ENCODE measurements at regions of chr19 and their contacts with region 1.

Region 1: DNA sequence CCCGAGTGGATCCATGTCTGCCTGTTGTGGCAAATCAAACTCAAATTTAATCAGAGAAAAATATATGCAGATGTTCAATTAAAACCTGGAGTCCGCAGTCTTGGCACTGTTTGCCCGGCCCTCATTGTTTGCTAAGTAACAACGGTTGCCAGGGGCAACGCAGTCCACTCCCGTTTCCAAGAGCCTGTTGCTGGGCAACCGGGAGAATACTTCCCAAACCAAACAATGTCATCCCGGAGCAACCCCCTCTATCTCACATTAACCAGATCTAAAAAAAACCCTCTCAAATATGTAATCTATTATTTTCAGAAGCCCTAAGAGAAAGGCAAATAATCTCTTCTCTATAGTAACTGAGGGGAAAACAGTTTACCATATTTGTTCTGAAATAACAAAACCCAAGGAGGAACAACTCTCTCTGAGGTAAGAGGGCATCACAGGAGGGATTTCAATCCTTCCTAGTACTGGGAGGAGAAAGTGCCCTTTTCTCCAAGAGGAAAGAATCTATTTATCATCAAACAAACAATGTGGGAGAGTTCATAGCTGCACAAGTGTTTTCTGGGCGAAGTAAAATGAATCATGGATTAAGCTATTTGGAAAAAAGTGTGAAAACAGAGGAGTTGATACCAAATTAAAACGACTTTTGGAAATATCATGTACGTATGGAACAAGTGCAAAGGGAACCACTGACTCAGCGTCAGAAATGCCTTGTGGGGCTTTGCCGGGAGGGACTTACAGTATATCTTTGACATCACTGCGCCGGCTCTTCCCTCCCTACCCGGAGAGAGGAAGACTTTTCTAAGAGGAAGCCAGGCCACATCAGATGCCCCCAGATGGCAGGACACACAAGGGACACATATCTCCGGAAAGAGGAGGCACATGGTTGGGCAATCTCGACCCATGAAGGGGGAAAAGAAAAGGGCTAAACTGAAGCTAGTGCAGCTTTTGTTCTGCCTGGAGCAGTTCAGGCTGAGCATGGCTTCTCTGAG is 43.3 kb downstream of the RFX2 start:
- DNase-seq: peak; percentile 91 to 98 (median 96)
- H3K4me3 ChIP-seq: peak overlapping the region in 1 of 3 experiments; percentile 29
- H3K4me3 Mint-ChIP-seq: peak overlapping the region; percentile 62 to 80
- H3K27ac ChIP-seq: peak overlapping the region; percentile 75 to 95
- H3K27ac Mint-ChIP-seq: peak overlapping the region; percentile 97 to 99 (median 99)
- H3K4me1 ChIP-seq: peaks cover 73 to 77% of the 10 kb centered on the region in 2 donors
- H3K4me1 Mint-ChIP-seq: peaks cover 89% of the 10 kb centered on the region
- H3K27me3 ChIP-seq: no peaks in the 10 kb centered on the region
- H3K27me3 Mint-ChIP-seq: peaks cover 0 to 18% (median 0%) of the 10 kb centered on the region in 3 donors
- CTCF ChIP-seq: no peak

Region 2: DNA sequence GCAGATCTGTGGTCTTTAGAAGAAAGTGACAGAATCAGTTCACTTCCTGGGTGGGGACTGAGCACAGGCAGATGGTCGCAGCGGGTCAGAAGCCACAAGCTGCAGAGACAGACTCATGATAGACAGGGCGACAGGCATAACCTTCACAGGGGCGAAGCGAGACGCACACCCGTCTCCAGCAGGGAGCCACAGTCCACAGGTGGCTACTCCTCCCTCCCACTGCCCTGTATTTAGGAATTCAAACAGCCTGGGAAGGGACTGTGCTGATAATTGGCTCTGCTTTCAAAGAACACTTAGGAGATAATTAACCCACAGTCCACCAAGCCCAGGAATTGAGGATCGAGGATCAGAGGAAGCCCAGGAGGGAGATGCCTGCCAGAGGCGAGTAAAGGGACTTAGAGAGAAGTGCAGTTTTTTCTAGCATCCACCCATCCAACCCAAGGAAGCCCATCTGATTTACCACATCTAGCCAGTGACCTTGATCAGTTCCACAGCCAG is 20.2 kb after region 1 on chr19:
- intact Hi-C with region 1: loop called (anchors 1 to 2 kb)
- DNase-seq: peak in 1 of 3 donors; percentile 25
- H3K4me3 ChIP-seq: peak overlapping the region in 1 of 3 experiments; percentile 44
- H3K4me3 Mint-ChIP-seq: peak overlapping the region; percentile 56 to 81
- H3K27ac ChIP-seq: peak overlapping the region; percentile 89
- H3K27ac Mint-ChIP-seq: peak overlapping the region; percentile 89 to 99 (median 95)
- H3K4me1 ChIP-seq: peaks cover 28 to 33% of the 10 kb centered on the region in 2 donors
- H3K4me1 Mint-ChIP-seq: peaks cover 39% of the 10 kb centered on the region
- H3K27me3 ChIP-seq: no peaks in the 10 kb centered on the region
- H3K27me3 Mint-ChIP-seq: peaks cover 0 to 3% (median 1%) of the 10 kb centered on the region in 3 donors
- CTCF ChIP-seq: no peak

Region 3: DNA sequence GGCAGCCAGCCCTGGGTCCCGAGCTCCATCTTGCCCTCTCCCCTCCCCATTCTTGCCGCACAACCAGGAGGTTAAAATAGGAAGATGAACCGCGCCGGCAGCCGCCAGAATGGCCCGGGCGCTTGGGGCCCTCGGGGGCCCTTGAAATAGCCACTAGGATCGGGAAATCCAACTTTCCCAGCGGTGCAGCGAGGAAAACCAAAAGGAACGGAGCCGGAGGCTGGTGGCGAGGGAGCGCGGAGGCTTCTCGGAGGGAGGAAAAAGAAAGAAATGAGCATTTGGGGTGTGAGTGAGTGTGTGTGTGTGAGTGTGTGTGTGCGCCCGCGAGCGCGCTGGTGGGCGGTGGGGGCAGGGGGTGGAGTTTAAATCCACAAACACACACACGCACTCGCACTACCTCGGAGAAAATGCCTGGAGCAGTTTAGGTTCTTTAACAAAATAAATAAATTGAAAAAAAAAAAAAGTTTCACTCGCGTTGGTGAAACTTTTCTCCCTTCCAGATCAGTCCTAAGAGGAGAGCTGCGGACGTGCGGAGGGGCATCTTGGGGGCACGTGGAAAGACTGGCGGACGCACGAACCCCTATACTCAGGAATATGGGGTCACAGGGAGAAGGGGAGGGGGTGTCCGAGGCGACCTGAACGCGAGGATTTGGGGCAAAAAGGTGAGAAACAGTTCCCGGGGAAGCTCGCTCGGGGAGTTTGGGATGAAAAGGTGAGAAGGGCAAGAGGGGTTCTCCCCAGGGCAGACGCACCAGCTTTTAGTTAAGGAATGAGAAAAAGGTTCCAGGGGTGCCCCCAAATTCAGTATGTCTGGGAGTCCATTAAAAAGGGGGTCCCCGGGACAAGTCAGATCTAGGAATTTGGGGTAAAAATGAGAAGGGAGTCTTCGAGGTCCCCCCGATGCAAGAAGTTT is 42.0 kb after region 1 on chr19:
- intact Hi-C with region 1: loop called (anchors 5 kb)
- DNase-seq: peak in 1 of 3 donors; percentile 49
- H3K4me3 ChIP-seq: peak overlapping the region; percentile 36 to 85 (median 58)
- H3K4me3 Mint-ChIP-seq: peak overlapping the region; percentile 95 to 98
- H3K27ac ChIP-seq: peak overlapping the region; percentile 28 to 29
- H3K27ac Mint-ChIP-seq: peak overlapping the region; percentile 64 to 96 (median 93)
- H3K4me1 ChIP-seq: peaks cover 35 to 44% of the 10 kb centered on the region in 2 donors
- H3K4me1 Mint-ChIP-seq: peaks cover 45% of the 10 kb centered on the region
- H3K27me3 ChIP-seq: peaks cover 0 to 17% of the 10 kb centered on the region in 2 donors
- H3K27me3 Mint-ChIP-seq: peaks cover 16 to 21% (median 20%) of the 10 kb centered on the region in 3 donors
- CTCF ChIP-seq: no peak

Region 4: DNA sequence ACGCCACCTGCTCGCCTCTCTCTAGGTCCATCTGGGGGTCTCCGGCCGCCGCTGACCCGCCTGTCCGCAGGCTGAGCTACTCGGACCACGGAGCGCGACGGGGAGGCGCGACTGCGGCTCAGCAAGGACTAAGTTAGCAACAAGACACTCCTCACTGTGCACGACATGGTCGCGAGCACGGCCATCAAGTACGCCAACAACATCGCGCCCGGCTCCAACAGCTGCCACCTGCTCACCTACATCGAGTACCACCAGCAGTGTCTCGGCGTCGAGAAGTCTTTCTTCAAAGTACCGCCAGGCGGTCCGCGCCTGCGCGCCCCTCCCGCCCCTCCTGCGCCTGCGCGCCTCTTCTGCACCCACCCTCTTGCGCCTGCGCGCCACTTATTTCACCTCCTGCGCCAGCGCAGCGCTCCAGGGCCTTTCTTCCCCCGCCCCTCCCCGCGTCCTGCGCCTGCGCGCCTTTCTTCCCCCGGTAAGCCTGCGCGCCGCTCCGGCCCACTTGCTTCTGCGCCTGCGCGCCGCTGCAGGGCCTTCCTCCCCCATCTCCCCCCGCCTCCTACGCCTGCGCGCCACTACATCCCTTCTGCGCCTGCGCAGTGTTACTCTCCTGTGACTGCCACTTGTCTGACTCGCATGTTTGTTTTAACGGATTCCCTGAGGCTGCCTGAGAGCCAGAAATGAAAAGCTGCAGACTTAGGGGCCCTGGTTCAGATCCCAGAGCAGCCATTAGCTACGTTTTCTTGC is 132.5 kb after region 1 on chr19:
- intact Hi-C with region 1: no loop called
- DNase-seq: peak; percentile 98 to 99 (median 99)
- H3K4me3 ChIP-seq: peak overlapping the region; percentile 52 to 93 (median 61)
- H3K4me3 Mint-ChIP-seq: peak overlapping the region; percentile 90 to 91
- H3K27ac ChIP-seq: peak overlapping the region; percentile 32 to 79
- H3K27ac Mint-ChIP-seq: peak overlapping the region; percentile 80 to 93 (median 88)
- H3K4me1 ChIP-seq: peaks cover 13 to 18% of the 10 kb centered on the region in 2 donors
- H3K4me1 Mint-ChIP-seq: peaks cover 13% of the 10 kb centered on the region
- H3K27me3 ChIP-seq: no peaks in the 10 kb centered on the region
- H3K27me3 Mint-ChIP-seq: peaks cover 0 to 4% (median 0%) of the 10 kb centered on the region in 3 donors
- CTCF ChIP-seq: peak; percentile 37